ENCODE measurements at regions of chr9 and their contacts with region 1.

Region 1: DNA sequence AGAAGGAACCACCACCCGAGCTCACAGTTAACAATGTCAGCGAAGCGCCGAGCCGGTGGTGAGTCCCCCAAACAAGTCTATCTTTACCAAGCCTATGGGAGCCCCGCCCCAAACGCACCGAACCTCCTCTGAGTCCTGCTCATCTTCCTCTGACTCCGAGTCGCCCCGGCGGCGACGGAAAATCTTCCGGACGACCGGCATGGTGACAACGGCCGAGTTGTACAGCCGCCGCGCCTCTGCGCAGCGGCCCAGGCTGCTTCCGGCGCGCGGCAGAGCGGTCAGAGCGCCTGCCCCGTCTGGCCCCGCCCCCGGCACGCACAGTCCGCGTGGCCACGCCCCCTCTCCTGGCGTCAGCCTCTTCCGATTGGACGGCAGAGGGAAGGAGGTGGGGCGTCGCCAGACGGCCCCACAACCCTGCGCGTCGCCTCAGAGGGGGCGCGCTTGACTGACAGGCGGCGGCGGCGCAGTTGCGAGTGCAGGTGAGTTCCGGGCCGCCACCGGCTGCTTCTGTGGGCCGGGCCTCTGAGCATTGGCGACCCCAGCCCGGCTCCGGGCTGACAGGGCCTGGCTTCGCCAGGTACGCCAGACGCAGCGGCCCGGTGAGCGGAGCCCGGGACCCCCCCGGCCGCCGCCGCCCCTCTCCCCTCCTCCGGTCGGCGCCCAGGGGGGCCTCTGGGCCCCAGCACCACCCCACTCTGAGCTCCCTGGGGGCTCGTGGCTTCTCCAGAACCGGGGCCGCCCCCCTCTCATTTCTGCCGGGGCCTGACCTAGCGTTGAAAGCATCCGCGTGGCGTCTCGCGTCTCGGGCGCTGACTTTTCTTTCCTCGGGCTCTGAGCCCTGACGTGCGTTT is at the starts of genes C9orf78 and USP20:
- DNase-seq: peak; percentile 93 to 99 (median 98)
- ATAC-seq: peak; percentile 87 to 89
- H3K4me3 Mint-ChIP-seq: peak within 1 kb of the TSS; percentile 95 to 100 (median 97)
- H3K27ac Mint-ChIP-seq: peak within 1 kb of the TSS; percentile 90 to 99 (median 99)
- H3K4me1 Mint-ChIP-seq: peaks cover 29 to 67% (median 63%) of the 10 kb centered on the region in 4 donors
- H3K27me3 Mint-ChIP-seq: no peaks in the 10 kb centered on the region
- polyA plus RNA-seq, gene C9orf78: 191 to 242 (median 222) TPM
- polyA plus RNA-seq, gene USP20: 37.1 to 76.4 (median 49.4) TPM

Region 2: GRCh38 chr9:129823935-129824601 is 11.2 kb before region 1 on chr9 and contains the start of gene TOR1A:
- POLR2A ChIA-PET with region 1: interaction called, 42 read pairs
- DNase-seq: peak; percentile 80 to 94 (median 89)
- ATAC-seq: peak; percentile 91 to 96
- H3K4me3 Mint-ChIP-seq: peak within 1 kb of the TSS; percentile 80 to 93 (median 88)
- H3K27ac Mint-ChIP-seq: peak within 1 kb of the TSS; percentile 80 to 95 (median 89)
- H3K4me1 Mint-ChIP-seq: peaks cover 8 to 29% (median 14%) of the 10 kb centered on the region in 4 donors
- H3K27me3 Mint-ChIP-seq: no peaks in the 10 kb centered on the region
- polyA plus RNA-seq, gene TOR1A: 42.6 to 55.0 (median 47.1) TPM

Region 3: GRCh38 chr9:129850821-129851540 is 15.7 kb after region 1 on chr9:
- POLR2A ChIA-PET with region 1: interaction called, 15 read pairs
- DNase-seq: no peak
- ATAC-seq: peak in 1 of 2 donors; percentile 19
- H3K4me3 Mint-ChIP-seq: no peak overlapping the region
- H3K27ac Mint-ChIP-seq: peak overlapping the region in 6 of 10 donors; percentile 21 to 83 (median 44)
- H3K4me1 Mint-ChIP-seq: peaks cover 20 to 83% (median 45%) of the 10 kb centered on the region in 4 donors
- H3K27me3 Mint-ChIP-seq: no peaks in the 10 kb centered on the region

Region 4: DNA sequence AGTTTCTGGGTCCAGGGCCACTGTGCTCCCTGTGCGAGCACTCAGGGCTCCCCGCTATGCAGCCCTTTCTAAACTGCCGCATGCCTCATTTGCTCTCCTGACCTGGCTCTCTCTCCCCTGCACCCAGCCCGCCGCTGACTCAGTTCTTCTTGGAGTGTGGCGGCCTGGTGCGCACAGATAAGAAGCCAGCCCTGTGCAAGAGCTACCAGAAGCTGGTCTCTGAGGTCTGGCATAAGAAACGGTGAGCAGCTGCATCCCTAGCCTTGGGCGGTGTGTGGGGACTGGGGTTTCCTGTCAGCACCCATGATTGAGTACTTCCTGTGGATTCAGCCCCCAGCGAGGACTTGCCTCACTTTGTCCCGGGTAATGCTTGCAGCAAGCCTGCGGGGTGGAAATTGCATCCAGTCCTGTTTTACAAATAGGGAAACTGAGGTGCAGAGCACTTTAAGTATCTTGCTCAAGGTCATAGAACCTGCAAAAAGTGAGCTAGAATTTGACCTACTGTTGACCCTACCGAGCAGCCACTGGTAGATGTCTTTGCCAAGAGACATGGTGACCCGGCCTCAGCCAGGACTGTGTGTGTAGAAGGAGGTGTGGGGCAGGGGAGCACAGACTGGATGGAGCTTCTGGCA is 27.9 kb after region 1 on chr9:
- POLR2A ChIA-PET with region 1: interaction called, 166 read pairs
- DNase-seq: peak in 9 of 10 donors; percentile 51 to 81 (median 58)
- ATAC-seq: peak; percentile 58 to 62
- H3K4me3 Mint-ChIP-seq: peak overlapping the region; percentile 24 to 82 (median 65)
- H3K27ac Mint-ChIP-seq: peak overlapping the region; percentile 86 to 96 (median 90)
- H3K4me1 Mint-ChIP-seq: peaks cover 27 to 77% (median 64%) of the 10 kb centered on the region in 4 donors
- H3K27me3 Mint-ChIP-seq: no peaks in the 10 kb centered on the region

Measured in naive thymus-derived CD8-positive, alpha-beta T cell (primary cell).